Left cardiac atrium (tissue), 4 donors: ENCODE measurements at regions of chr7 and their contacts with region 1.

Region 1: GRCh38 chr7:121102619-121103018 is 114.1 kb downstream of the CPED1 start:
- DNase-seq: no peak
- ATAC-seq: no peak

Region 2: GRCh38 chr7:120799813-120800475 is 302.7 kb before region 1 on chr7:
- intact Hi-C with region 1: loop called (anchors 2 to 5 kb)
- DNase-seq: no peak
- ATAC-seq: no peak